ENCODE measurements at regions of chr2 and their contacts with region 1.

Region 1: DNA sequence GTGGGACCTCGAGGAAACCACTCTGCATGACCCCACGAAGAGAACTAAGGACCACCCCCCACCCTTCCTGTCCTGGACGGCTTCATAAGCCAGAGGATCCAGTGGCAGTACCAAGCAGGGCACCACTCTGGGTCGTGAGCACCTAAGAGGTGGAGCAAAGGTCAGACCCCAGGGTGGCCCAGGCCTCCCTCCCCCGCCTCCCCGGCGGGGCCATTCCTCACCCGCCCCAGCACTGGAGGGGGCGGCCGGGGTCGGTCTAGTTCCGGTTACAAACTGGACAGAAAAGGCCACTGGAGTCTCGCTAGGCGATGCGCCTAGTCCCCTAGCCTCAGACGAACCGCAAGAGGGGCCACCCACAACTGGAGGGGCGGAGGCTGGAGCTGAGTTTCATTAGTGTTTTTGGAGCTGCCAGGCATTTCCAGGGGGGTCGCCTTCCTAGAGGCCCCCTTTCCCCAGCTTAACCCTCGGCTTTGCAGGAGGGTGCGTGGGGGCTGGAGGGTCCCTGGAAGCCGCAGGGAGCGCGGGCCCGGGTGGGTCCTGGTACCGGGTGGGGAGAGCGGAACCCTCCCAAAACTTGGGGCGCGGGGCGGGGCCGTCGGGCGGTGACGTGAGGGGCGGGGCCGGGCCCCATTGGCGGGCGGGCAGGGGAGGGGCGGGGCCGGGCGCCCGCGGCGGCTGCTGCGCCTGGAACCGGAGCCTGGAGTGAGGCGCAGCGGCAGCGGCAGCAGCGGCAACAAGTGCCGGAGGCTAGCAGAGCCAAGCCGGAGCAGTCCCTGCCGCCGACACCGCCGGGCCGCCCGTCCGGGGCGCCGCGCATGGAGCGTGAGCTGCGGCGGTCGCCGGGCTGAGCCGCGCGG is at the start of gene B3GNT2:
- DNase-seq: peak; percentile 81
- ATAC-seq: peak; percentile 81
- H3K4me3 Mint-ChIP-seq: peak within 1 kb of the TSS; percentile 92
- H3K27ac Mint-ChIP-seq: peak within 1 kb of the TSS; percentile 89
- H3K4me1 Mint-ChIP-seq: peaks cover 38% of the 10 kb centered on the region
- H3K27me3 Mint-ChIP-seq: no peaks in the 10 kb centered on the region
- CTCF ChIP-seq: no peak
- total RNA-seq, gene B3GNT2: 34.0 and 34.9 TPM in 2 replicates

Region 2: DNA sequence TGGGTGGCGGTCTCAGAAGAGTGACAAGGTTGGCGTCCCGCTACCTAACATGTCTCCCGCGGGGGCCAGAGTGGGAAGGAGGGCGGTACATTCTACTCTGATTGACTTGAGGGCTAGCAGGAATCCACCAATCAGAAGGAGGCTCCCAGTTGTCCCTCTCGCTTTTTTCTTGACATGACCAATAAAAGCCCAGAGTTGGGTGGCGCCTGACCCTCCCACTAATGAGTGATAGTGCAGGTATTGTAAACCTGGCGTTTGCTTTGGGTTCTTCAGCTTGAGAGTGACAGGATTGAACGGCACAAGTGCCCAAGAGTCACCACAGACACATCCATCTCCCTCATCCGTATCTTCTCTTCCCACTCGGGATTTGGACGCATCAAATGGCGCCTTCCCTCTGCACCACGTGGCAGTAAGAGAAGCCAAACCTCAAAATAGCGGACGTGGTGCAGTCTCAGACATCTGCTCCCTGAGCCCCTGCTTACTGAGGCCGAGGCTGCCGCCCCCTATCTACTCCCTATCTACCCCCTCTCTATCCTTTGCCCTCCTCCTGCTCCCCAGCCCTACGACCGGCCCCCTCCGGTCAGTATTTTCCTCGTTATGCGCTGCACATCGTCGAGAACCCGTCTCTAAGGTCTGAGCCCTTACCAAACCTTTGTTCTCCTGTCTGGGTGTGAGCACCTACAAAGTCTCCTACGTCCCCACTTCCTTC is 341.0 kb before region 1 on chr2:
- CTCF ChIA-PET with region 1: no interaction called
- POLR2A ChIA-PET with region 1: interaction called, 3 read pairs
- intact Hi-C with region 1: loop called (anchors 1 kb)
- DNase-seq: peak; percentile 69
- ATAC-seq: peak; percentile 86
- H3K4me3 Mint-ChIP-seq: peak overlapping the region; percentile 94
- H3K27ac Mint-ChIP-seq: peak overlapping the region; percentile 95
- H3K4me1 Mint-ChIP-seq: peaks cover 19% of the 10 kb centered on the region
- H3K27me3 Mint-ChIP-seq: no peaks in the 10 kb centered on the region
- CTCF ChIP-seq: no peak

Region 3: GRCh38 chr2:62038975-62039771 is 156.5 kb before region 1 on chr2:
- CTCF ChIA-PET with region 1: no interaction called
- POLR2A ChIA-PET with region 1: interaction called, 8 read pairs
- intact Hi-C with region 1: loop called (anchors 1 kb)
- DNase-seq: no peak
- ATAC-seq: peak; percentile 96
- H3K4me3 Mint-ChIP-seq: peak overlapping the region; percentile 64
- H3K27ac Mint-ChIP-seq: peak overlapping the region; percentile 86
- H3K4me1 Mint-ChIP-seq: peaks cover 30% of the 10 kb centered on the region
- H3K27me3 Mint-ChIP-seq: no peaks in the 10 kb centered on the region
- CTCF ChIP-seq: no peak

Region 4: DNA sequence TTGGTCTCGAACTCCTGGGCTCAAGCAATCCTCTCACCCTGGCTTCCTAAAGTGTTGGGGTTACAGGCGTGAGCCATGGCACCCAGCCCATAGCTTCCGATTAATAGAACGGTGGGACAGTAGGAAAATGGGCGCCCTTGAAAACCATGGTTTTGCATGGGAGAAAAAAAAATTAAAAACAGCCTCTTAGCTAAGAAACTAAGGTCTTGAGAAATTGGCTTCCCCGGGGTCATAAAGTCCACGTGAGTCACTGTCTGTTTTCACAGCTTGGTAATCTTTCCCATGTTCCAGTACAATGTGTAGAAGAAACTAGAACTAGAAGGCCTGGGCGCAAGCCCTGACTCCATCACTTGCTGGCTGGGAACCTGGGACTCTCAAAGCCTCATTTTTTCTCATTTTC is 21.0 kb after region 1 on chr2:
- CTCF ChIA-PET with region 1: no interaction called
- POLR2A ChIA-PET with region 1: no interaction called
- intact Hi-C with region 1: loop called (anchors 2 kb)
- DNase-seq: no peak
- ATAC-seq: no peak
- H3K4me3 Mint-ChIP-seq: no peak overlapping the region
- H3K27ac Mint-ChIP-seq: no peak overlapping the region
- H3K4me1 Mint-ChIP-seq: peaks cover 86% of the 10 kb centered on the region
- H3K27me3 Mint-ChIP-seq: no peaks in the 10 kb centered on the region
- CTCF ChIP-seq: no peak

Region 5: DNA sequence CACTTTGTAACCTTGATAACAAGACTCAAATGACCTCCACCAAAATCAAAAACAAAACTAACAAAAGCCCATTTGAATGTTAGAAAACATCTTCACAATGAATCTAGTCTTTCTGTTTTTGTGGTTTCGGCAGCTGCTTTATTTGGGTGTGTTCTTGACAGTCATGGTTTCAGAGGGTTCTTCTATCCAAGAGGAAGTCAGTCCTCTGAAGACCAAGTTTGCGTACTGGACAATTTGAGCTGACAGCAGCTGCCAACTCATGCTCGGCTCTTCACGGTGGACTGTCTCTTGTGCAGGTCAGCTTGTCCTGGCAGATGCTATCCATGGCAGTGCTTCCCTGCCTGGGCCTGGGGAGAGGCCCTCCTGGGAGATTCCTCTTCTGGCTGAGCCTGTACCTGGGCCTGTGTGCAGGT is 219.4 kb after region 1 on chr2:
- CTCF ChIA-PET with region 1: interaction called, 3 read pairs
- POLR2A ChIA-PET with region 1: no interaction called
- intact Hi-C with region 1: loop called (anchors 1 kb)
- DNase-seq: no peak
- ATAC-seq: no peak
- H3K4me3 Mint-ChIP-seq: no peak overlapping the region
- H3K27ac Mint-ChIP-seq: no peak overlapping the region
- H3K4me1 Mint-ChIP-seq: peaks cover 13% of the 10 kb centered on the region
- H3K27me3 Mint-ChIP-seq: peaks cover 9% of the 10 kb centered on the region
- CTCF ChIP-seq: no peak

Region 6: DNA sequence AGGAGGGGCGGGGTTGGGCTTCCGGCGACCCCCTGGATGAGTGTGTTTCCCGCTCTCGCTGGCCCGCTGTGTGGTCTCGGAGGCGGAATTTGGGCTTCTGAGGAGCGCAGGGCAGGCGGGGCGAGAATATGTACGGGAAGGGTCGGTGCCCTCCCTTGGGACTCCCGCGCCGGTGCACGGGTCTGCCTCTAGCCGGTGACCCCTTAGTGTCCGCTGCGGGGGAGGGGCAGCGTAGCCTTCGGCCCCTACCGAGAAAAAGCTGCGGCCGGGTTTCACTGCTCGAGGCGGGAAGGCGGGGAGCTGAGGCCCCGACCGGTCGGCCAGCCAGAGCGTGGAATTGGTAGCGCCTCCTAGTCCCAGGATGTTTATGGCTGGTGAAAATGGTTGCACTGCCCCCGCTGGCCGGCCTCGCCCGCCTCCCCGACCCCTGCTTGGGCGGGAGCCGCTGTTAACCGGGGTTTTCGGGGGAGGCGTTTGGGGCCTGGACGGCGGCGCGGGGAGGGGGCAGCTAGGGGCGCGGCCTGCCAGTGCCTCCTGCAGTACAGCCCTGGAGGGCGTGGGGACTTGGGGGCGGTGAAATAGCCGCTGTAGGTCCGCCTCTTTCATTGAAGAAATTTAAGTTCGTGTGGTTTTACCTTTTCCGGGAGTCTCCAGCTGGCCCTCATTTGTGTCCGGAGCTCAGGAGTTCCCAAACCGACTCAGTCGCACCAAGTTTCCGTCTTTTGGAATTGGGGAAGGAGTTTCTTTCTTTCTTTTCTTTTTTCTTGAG is 1645.8 kb after region 1 on chr2 and contains the start of gene UGP2:
- CTCF ChIA-PET with region 1: no interaction called
- POLR2A ChIA-PET with region 1: no interaction called
- intact Hi-C with region 1: loop called (anchors 10 kb)
- DNase-seq: peak; percentile 75
- ATAC-seq: peak; percentile 68
- H3K4me3 Mint-ChIP-seq: peak within 1 kb of the TSS; percentile 97
- H3K27ac Mint-ChIP-seq: peak within 1 kb of the TSS; percentile 97
- H3K4me1 Mint-ChIP-seq: peaks cover 53% of the 10 kb centered on the region
- H3K27me3 Mint-ChIP-seq: peaks cover 1% of the 10 kb centered on the region
- CTCF ChIP-seq: no peak
- total RNA-seq, gene UGP2: 69.8 and 73.5 TPM in 2 replicates

Measured in activated B cell treated with CpG ODN at 0.5 μM for 24 hours (primary cell).